ENCODE measurements at regions of chr3 and their contacts with region 1.

Region 1: GRCh38 chr3:12484198-12484974 is at the start of gene TSEN2:
- DNase-seq: peak; percentile 98
- ATAC-seq: peak; percentile 97
- H3K4me3 Mint-ChIP-seq: peak within 1 kb of the TSS; percentile 96
- H3K27ac Mint-ChIP-seq: peak within 1 kb of the TSS; percentile 97
- H3K4me1 Mint-ChIP-seq: peaks cover 42% of the 10 kb centered on the region
- H3K27me3 Mint-ChIP-seq: no peaks in the 10 kb centered on the region
- total RNA-seq, gene TSEN2: 17.8 to 19.4 TPM

Region 2: DNA sequence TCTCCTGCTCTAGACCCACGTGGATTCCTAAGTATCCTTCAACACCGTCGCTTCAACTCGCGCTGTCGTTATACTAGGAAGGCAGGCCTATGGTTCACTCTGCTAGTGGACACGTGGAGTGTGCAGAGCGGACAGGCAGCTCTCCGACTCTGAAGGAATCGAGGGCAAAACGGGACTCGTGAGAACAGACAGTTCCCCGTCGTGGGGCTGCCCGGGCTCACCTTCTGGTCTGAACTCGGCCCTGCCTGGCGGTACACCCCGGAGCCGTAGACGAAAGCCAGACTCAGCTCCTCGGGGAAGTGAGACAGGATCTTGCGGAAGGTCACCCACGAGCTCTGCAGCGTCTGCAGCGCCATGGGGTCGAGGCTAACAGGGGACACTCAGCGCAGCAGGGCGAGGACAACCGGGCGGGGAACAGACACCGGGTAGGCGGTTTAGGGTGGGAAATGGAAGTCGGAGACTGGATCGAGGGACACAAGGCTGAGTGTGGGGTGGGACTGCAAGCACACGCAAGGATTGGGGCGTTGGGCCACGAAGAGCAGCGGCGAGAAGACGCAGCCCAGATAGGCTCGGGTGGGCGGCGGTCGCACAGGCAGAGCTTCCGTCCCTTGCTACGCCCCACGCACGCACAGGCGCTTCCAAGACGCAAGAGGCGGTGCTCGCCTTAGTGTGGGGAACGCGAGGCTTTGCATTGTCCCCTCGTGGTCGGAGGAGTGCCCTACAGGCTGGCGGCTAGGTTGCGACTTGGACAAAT is 637.9 kb before region 1 on chr3 and contains the start of gene TAMM41:
- CTCF ChIA-PET with region 1: no interaction called
- POLR2A ChIA-PET with region 1: no interaction called
- intact Hi-C with region 1: loop called in 1 of 2 experiments (anchors 1 kb)
- DNase-seq: peak; percentile 95
- ATAC-seq: peak; percentile 100
- H3K4me3 Mint-ChIP-seq: peak within 1 kb of the TSS; percentile 97
- H3K27ac Mint-ChIP-seq: peak within 1 kb of the TSS; percentile 91
- H3K4me1 Mint-ChIP-seq: peaks cover 31% of the 10 kb centered on the region
- H3K27me3 Mint-ChIP-seq: no peaks in the 10 kb centered on the region
- total RNA-seq, gene TAMM41: 26.3 to 30.2 TPM

Region 3: GRCh38 chr3:12040902-12041301 is 443.5 kb before region 1 on chr3:
- CTCF ChIA-PET with region 1: no interaction called
- POLR2A ChIA-PET with region 1: no interaction called
- intact Hi-C with region 1: no loop called
- DNase-seq: no peak
- ATAC-seq: no peak
- H3K4me3 Mint-ChIP-seq: no peak overlapping the region
- H3K27ac Mint-ChIP-seq: no peak overlapping the region
- H3K4me1 Mint-ChIP-seq: no peaks in the 10 kb centered on the region
- H3K27me3 Mint-ChIP-seq: peaks cover 39% of the 10 kb centered on the region

Region 4: DNA sequence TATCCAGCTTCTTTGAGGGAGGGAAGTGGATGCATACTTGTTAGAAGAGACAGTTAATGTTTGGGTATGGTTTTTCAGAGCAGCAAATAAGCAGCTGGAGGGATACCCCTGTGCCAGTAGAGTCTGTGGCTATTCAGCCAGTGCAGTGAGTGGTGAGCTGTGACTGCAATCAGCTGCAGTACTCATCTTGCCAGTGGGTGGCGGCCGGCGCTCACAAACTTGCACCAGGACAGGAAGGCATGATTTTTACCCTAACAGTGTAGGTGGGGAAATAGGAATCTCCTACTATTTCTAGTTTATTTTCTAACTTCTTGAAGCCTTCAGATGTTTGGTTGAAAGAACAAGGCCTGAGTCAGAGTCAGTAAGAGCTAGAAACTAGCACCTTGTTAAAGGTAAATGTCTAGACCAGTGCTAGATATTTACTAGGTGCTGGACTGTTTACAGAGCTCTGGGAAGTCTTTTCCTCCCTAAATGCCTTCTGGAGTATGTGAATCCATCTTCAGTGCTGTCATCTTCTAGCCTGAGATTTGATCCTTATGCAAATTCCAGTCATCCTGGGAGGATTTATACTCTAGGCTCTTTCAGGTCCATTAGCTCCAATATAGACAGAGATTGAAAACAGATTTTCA is 349.2 kb before region 1 on chr3:
- CTCF ChIA-PET with region 1: interaction called, 141 read pairs
- POLR2A ChIA-PET with region 1: no interaction called
- intact Hi-C with region 1: loop called (anchors 1 kb)
- DNase-seq: peak; percentile 85
- ATAC-seq: peak; percentile 91
- H3K4me3 Mint-ChIP-seq: no peak overlapping the region
- H3K27ac Mint-ChIP-seq: no peak overlapping the region
- H3K4me1 Mint-ChIP-seq: no peaks in the 10 kb centered on the region
- H3K27me3 Mint-ChIP-seq: peaks cover 14% of the 10 kb centered on the region

Region 5: DNA sequence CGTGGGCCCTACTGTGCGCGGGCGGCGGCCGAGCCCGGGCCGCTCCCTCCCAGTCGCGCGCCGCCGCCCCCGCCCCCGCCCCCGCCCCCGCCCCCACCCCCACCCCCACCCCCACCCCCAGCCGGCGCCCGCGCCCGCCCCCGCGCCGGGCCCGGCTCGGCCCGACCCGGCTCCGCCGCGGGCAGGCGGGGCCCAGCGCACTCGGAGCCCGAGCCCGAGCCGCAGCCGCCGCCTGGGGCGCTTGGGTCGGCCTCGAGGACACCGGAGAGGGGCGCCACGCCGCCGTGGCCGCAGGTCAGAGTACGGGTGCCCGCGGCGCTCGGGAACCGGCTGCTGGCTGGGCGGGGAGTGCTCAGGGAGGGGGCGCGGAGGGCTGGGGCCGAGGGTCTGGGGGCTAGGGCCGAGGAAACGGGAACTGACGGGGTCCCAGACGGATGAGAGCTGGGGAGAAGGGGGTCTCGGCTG is 196.6 kb before region 1 on chr3:
- CTCF ChIA-PET with region 1: interaction called, 4 read pairs
- POLR2A ChIA-PET with region 1: no interaction called
- intact Hi-C with region 1: loop called in 1 of 2 experiments (anchors 5 kb)
- DNase-seq: peak; percentile 44
- ATAC-seq: peak; percentile 70
- H3K4me3 Mint-ChIP-seq: peak overlapping the region; percentile 52
- H3K27ac Mint-ChIP-seq: no peak overlapping the region
- H3K4me1 Mint-ChIP-seq: peaks cover 4% of the 10 kb centered on the region
- H3K27me3 Mint-ChIP-seq: peaks cover 47% of the 10 kb centered on the region

Region 6: GRCh38 chr3:12613250-12613649 is 128.9 kb after region 1 on chr3:
- CTCF ChIA-PET with region 1: no interaction called
- POLR2A ChIA-PET with region 1: no interaction called
- intact Hi-C with region 1: no loop called
- DNase-seq: no peak
- ATAC-seq: no peak
- H3K4me3 Mint-ChIP-seq: no peak overlapping the region
- H3K27ac Mint-ChIP-seq: peak overlapping the region; percentile 43
- H3K4me1 Mint-ChIP-seq: peaks cover 48% of the 10 kb centered on the region
- H3K27me3 Mint-ChIP-seq: no peaks in the 10 kb centered on the region

Region 7: GRCh38 chr3:12663936-12664908 is 179.8 kb after region 1 on chr3 and contains the start of gene RAF1:
- CTCF ChIA-PET with region 1: no interaction called
- POLR2A ChIA-PET with region 1: no interaction called
- intact Hi-C with region 1: loop called in 1 of 2 experiments (anchors 1 kb)
- DNase-seq: peak; percentile 99
- ATAC-seq: peak; percentile 94
- H3K4me3 Mint-ChIP-seq: peak within 1 kb of the TSS; percentile 81
- H3K27ac Mint-ChIP-seq: peak within 1 kb of the TSS; percentile 96
- H3K4me1 Mint-ChIP-seq: peaks cover 25% of the 10 kb centered on the region
- H3K27me3 Mint-ChIP-seq: no peaks in the 10 kb centered on the region
- total RNA-seq, gene RAF1: 66.8 to 74.7 TPM

Region 8: DNA sequence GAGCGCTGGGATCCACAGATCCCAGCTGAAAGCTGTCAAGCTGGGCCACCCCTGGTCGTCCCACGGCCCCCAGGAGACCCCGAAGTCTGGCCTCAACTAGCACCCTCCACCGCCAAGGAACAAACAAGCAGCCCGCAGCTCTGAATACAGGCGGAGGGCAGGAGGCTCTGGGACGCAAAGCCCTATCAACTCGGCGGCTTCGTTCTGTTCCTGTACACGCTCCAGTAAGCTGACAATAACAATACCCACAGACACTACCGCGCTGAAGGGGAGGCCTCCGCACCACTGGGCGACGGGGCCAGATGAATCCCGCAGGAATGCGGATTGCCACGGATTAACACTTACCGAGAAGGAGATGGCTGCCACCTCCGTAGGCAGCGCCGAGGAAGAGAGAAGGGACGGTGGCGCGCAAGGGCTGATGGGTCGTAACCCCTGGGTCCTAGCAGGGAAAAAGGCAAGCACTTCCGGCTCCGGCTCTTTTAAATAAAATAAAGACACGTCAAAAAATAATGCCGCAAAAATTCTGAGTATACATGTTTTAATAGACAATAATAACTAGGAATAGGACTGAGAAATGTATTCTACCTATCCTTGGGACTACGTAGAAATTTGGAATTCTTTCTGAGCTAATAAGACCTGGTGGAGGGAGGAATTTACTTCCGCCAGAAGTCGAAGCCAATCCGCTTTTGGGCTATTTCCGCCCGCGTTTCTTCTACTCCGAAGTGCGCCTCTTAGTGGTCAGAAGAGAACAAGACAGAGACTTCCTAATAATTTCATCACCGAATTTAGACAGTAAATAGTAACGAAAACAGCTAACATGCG is 357.0 kb after region 1 on chr3 and contains the start of gene RPL32:
- CTCF ChIA-PET with region 1: no interaction called
- POLR2A ChIA-PET with region 1: no interaction called
- intact Hi-C with region 1: loop called in 1 of 2 experiments (anchors 1 kb)
- DNase-seq: peak; percentile 92
- ATAC-seq: peak; percentile 90
- H3K4me3 Mint-ChIP-seq: peak within 1 kb of the TSS; percentile 98
- H3K27ac Mint-ChIP-seq: peak within 1 kb of the TSS; percentile 99
- H3K4me1 Mint-ChIP-seq: peaks cover 43% of the 10 kb centered on the region
- H3K27me3 Mint-ChIP-seq: no peaks in the 10 kb centered on the region
- total RNA-seq, gene RPL32: 2,842 to 4,727 TPM

Measured in activated CD4-positive, alpha-beta T cell treated with anti-CD3 and anti-CD28 coated beads for 36 hours (primary cell).